ENCODE measurements at regions of chr5 and their contacts with region 1.

Region 1: DNA sequence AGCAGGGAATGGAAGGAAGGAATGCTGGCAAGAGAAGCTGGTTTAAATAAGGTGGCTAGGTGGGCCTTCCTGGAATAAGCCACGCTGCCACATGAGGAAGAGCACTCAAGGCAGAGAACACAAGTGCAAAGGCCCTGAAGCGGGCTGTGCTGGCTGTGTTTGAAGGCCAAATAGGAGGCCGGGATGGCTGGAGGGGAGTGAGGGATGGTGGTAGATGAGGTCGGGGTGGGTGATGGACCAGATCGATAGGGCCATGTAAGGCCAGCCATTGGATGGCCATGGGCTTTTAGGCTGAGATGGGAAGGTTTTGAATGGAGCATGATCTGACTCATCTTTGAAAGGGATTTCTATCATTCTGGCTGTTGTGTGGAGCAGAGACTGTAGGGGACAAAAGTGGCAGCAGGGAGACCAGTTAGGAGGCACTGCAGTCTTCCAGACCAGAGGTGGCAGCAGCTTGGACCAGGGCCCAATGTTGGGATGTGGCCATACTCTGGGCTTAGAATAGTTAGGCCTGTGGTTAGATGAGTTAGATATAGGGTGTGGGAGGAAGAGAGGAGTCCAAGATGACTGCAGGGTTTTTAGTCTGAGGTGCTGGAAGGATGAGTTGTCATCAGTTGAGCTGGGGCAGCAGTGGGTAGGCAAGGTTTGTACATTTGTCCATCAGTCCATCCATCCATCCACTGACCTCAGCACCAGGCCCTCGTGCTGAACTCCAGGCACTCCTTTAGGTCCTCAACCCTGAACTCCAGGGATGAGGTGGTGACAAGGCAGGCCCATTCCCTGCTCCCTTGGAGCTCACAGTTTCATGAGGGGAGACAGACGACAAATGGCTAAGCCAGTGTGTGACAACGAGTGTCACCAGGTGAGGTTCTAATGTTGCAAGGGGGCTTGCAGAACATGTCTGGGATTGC is 30.3 kb downstream of the NDST1 start:
- DNase-seq: no peak
- H3K4me3 ChIP-seq: no peak overlapping the region
- H3K27ac ChIP-seq: peak overlapping the region in 3 of 4 donors; percentile 17 to 42 (median 42)
- H3K4me1 ChIP-seq: peaks cover 18 to 44% (median 24%) of the 10 kb centered on the region in 3 donors
- H3K27me3 ChIP-seq: no peaks in the 10 kb centered on the region
- CTCF ChIP-seq: no peak
- POLR2A ChIP-seq: no peak

Region 2: DNA sequence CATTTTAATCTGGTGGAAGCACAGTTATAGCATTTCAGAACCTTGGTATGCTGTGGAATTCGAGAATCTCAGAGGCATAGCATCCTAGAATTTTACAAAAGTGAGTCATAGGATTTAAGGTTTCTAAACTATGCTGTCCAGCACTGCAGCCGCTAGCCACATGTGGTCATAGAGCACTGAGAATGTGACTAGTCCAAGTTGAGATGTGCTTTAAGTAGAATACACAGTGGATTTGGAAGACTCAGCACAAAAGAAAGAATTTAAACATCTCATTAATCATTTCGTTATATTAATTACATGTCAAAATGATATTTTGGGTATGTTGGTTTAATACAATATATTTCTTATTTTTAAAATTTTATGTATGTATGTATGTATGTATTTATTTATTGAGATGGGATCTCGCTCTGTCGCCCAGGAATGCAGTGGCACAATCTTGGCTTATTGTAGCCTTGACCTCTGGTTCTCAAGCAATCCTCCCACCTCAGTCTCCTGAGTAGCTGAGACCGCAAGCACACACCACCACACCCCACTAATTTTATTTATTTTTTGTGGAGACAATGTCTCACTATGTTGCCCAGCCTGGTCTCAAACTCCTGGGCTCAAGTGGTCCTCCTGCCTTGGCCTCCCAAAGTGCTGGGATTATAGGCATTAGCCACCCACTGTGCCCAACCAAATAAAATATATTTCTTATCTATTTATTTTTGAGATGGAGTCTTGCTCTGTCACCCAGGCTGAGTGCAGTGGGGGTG is 68.4 kb before region 1 on chr5:
- intact Hi-C with region 1: loop called (anchors 5 kb)
- DNase-seq: no peak
- H3K4me3 ChIP-seq: no peak overlapping the region
- H3K27ac ChIP-seq: no peak overlapping the region
- H3K4me1 ChIP-seq: peaks cover 4 to 20% (median 19%) of the 10 kb centered on the region in 3 donors
- H3K27me3 ChIP-seq: no peaks in the 10 kb centered on the region
- CTCF ChIP-seq: no peak
- POLR2A ChIP-seq: no peak

Region 3: DNA sequence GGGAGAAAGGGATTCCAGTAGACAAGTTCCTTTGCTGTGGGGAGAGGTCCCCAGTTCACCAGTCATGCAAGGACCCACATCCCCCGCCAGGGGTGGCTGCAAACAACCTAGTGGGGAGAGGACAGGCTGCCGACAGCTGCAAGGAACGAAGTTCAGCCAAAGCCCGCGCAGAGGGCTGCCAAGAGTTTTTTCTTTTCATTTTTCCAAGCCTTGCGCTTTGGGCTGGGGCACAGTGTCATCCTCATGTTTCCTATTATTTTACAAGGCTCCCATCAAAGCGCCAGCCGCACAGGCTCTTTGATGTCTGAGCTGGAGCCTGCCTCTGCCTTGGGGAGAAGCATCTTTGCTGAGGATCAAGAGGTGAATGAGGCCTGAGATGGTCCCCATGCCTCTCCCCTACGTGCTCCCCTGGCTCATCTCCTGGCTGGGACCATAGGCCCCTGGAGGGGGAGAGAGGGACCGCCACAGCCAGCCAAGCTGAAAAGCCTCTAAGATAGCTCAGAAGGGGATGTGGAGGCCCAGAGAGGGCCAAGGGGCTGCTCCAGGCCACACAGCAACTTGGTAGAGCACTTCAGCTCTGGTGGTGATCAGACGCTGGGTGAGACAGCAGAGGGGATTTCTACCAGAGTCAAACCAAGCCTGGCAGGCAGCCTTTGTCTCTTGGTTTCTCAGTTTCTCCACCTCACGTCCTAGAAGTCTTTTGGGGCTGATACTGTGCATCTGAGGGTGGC is 51.8 kb after region 1 on chr5:
- intact Hi-C with region 1: no loop called
- DNase-seq: no peak
- H3K4me3 ChIP-seq: no peak overlapping the region
- H3K27ac ChIP-seq: peak overlapping the region; percentile 25 to 74 (median 61)
- H3K4me1 ChIP-seq: peaks cover 0 to 48% (median 24%) of the 10 kb centered on the region in 3 donors
- H3K27me3 ChIP-seq: no peaks in the 10 kb centered on the region
- CTCF ChIP-seq: peak; percentile 18 to 73 (median 56)
- POLR2A ChIP-seq: no peak